ENCODE measurements at regions of chr7 and their contacts with region 1.

Region 1: GRCh38 chr7:122528879-122529481 is 169.9 kb downstream of the RNF133 start:
- DNase-seq: no peak
- H3K4me3 ChIP-seq: no peak overlapping the region
- H3K27ac ChIP-seq: no peak overlapping the region
- H3K4me1 ChIP-seq: no peaks in the 10 kb centered on the region
- H3K27me3 ChIP-seq: no peaks in the 10 kb centered on the region
- CTCF ChIP-seq: peak; percentile 33 to 55 (median 41)
- EP300 ChIP-seq: no peak
- POLR2A ChIP-seq: no peak

Region 2: GRCh38 chr7:122219253-122219865 is 309.6 kb before region 1 on chr7:
- intact Hi-C with region 1: loop called (anchors 10 kb)
- DNase-seq: no peak
- H3K4me3 ChIP-seq: no peak overlapping the region
- H3K27ac ChIP-seq: no peak overlapping the region
- H3K4me1 ChIP-seq: no peaks in the 10 kb centered on the region
- H3K27me3 ChIP-seq: no peaks in the 10 kb centered on the region
- CTCF ChIP-seq: peak; percentile 57 to 60 (median 57)
- EP300 ChIP-seq: no peak
- POLR2A ChIP-seq: no peak

Region 3: GRCh38 chr7:122736183-122736582 is 207.2 kb after region 1 on chr7:
- intact Hi-C with region 1: no loop called
- DNase-seq: no peak
- H3K4me3 ChIP-seq: no peak overlapping the region
- H3K27ac ChIP-seq: no peak overlapping the region
- H3K4me1 ChIP-seq: peaks cover 0 to 9% (median under 1%) of the 10 kb centered on the region in 4 donors
- H3K27me3 ChIP-seq: no peaks in the 10 kb centered on the region
- CTCF ChIP-seq: no peak
- EP300 ChIP-seq: no peak
- POLR2A ChIP-seq: no peak

Region 4: GRCh38 chr7:122896509-122896908 is 367.5 kb after region 1 on chr7:
- intact Hi-C with region 1: no loop called
- DNase-seq: no peak
- H3K4me3 ChIP-seq: no peak overlapping the region
- H3K27ac ChIP-seq: no peak overlapping the region
- H3K4me1 ChIP-seq: peaks cover 0 to 7% (median 0%) of the 10 kb centered on the region in 4 donors
- H3K27me3 ChIP-seq: no peaks in the 10 kb centered on the region
- CTCF ChIP-seq: peak in 1 of 3 experiments; percentile 12
- EP300 ChIP-seq: no peak
- POLR2A ChIP-seq: no peak

Region 5: GRCh38 chr7:123242467-123243092 is 713.6 kb after region 1 on chr7:
- intact Hi-C with region 1: no loop called
- DNase-seq: no peak
- H3K4me3 ChIP-seq: no peak overlapping the region
- H3K27ac ChIP-seq: peak overlapping the region in 2 of 4 donors; percentile 17 to 29
- H3K4me1 ChIP-seq: peaks cover 0 to 16% (median 7%) of the 10 kb centered on the region in 4 donors
- H3K27me3 ChIP-seq: no peaks in the 10 kb centered on the region
- CTCF ChIP-seq: no peak
- EP300 ChIP-seq: no peak
- POLR2A ChIP-seq: no peak